ENCODE measurements at regions of chrX and their contacts with region 1.

Region 1: DNA sequence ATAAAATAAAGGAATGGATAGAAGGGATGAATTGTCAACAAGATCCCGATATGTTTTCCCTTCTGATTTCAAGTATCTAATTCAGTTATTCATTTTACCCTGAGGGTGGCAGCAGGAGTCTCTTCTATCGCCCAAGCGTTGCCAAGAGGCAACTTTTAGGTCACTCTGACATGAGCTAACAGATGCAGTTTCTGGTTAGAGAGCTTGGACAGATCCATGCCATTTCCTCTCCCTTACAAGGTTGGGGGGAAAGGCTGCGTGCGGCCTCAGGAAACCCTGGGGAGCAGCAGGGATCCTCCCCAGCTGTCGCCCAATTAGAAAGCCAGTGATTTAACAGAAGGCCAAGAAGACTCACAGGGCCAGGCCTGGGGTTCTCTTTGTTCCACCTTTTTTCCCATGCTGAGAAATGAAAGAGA is 35.3 kb upstream of the WAS start:
- DNase-seq: no peak
- ATAC-seq: peak; percentile 77
- H3K4me3 ChIP-seq: no peak overlapping the region
- H3K27ac ChIP-seq: no peak overlapping the region
- H3K4me1 ChIP-seq: no peaks in the 10 kb centered on the region
- H3K27me3 ChIP-seq: no peaks in the 10 kb centered on the region
- CTCF ChIP-seq: peak in 2 of 3 experiments; percentile 30 to 51; a peak in 3 of 6 replicates
- EP300 ChIP-seq: no peak
- POLR2A ChIP-seq: no peak
- RAD21 ChIP-seq: peak; percentile 74

Region 2: GRCh38 chrX:48715072-48715471 is 66.7 kb after region 1 on chrX:
- CTCF ChIA-PET with region 1: no interaction called
- POLR2A ChIA-PET with region 1: no interaction called
- RAD21 ChIA-PET with region 1: no interaction called
- SMC1A ChIA-PET with region 1: no interaction called
- in situ Hi-C with region 1: no loop called
- intact Hi-C with region 1: no loop called
- DNase-seq: no peak
- ATAC-seq: no peak
- H3K4me3 ChIP-seq: no peak overlapping the region
- H3K27ac ChIP-seq: no peak overlapping the region
- H3K4me1 ChIP-seq: no peaks in the 10 kb centered on the region
- H3K27me3 ChIP-seq: no peaks in the 10 kb centered on the region
- CTCF ChIP-seq: no peak
- EP300 ChIP-seq: no peak
- POLR2A ChIP-seq: no peak
- RAD21 ChIP-seq: no peak

Region 3: DNA sequence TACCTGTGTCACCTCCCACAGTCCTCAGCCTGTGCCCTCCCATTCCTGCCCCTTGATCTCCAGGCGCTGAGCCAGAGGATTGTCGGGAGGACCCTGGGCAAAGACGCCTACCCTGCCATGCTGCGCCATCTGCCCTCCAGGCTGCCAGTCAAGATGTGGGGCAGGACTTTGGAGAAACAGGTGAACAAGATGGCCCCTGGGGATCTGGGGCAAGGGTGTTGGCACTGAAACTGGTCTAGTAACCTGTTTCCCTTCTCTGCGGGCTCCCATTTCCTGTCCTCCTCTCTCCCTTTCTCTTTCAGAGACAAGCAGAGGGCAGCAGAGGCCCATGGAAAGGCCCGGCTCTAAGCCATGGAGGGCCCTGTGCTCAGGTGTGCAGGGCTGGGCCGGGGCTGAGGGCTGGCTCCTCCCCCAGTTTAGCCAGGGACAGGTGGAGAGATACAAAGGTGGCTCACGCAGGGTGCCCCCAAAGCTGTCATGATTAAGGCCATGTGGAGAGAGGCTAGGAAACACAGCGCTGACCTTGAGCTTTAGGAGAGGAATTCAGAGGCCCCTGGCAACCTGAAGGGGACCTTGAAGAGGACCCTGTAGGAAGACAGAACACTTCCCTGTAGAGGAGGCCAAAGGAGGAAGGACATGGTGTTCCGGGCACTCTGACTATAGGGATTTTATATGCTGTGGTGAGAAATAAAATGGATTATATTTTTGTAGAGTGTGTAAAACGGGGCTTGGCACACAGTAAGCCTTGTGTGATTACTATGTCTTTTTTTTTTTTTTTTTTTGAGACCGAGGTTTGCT is 113.5 kb after region 1 on chrX and contains the start of gene GLOD5:
- CTCF ChIA-PET with region 1: no interaction called
- POLR2A ChIA-PET with region 1: no interaction called
- RAD21 ChIA-PET with region 1: no interaction called
- SMC1A ChIA-PET with region 1: no interaction called
- in situ Hi-C with region 1: no loop called
- intact Hi-C with region 1: no loop called
- DNase-seq: no peak
- ATAC-seq: peak; percentile 75
- H3K4me3 ChIP-seq: no peak within 1 kb of the TSS
- H3K27ac ChIP-seq: no peak within 1 kb of the TSS
- H3K4me1 ChIP-seq: no peaks in the 10 kb centered on the region
- H3K27me3 ChIP-seq: no peaks in the 10 kb centered on the region
- CTCF ChIP-seq: peak in 1 of 3 experiments; percentile 26; a peak in 2 of 6 replicates
- EP300 ChIP-seq: no peak
- POLR2A ChIP-seq: no peak
- RAD21 ChIP-seq: peak; percentile 53
- polyA plus RNA-seq, gene GLOD5: not detected

Region 4: GRCh38 chrX:48891402-48892288 is 243.3 kb after region 1 on chrX:
- CTCF ChIA-PET with region 1: interaction called, 5 read pairs
- POLR2A ChIA-PET with region 1: no interaction called
- RAD21 ChIA-PET with region 1: interaction called, 3 read pairs
- SMC1A ChIA-PET with region 1: interaction called, 8 read pairs
- in situ Hi-C with region 1: no loop called
- intact Hi-C with region 1: loop called (anchors 5 kb)
- DNase-seq: no peak
- ATAC-seq: peak; percentile 95
- H3K4me3 ChIP-seq: peak overlapping the region; percentile 67; the same call in 1 of the 2 replicates
- H3K27ac ChIP-seq: no peak overlapping the region
- H3K4me1 ChIP-seq: no peaks in the 10 kb centered on the region
- H3K27me3 ChIP-seq: no peaks in the 10 kb centered on the region
- CTCF ChIP-seq: peak; percentile 41 to 70 (median 51); a peak in 5 of 6 replicates
- EP300 ChIP-seq: no peak
- POLR2A ChIP-seq: no peak
- RAD21 ChIP-seq: peak; percentile 43; the same call in 1 of the 2 replicates

Region 5: DNA sequence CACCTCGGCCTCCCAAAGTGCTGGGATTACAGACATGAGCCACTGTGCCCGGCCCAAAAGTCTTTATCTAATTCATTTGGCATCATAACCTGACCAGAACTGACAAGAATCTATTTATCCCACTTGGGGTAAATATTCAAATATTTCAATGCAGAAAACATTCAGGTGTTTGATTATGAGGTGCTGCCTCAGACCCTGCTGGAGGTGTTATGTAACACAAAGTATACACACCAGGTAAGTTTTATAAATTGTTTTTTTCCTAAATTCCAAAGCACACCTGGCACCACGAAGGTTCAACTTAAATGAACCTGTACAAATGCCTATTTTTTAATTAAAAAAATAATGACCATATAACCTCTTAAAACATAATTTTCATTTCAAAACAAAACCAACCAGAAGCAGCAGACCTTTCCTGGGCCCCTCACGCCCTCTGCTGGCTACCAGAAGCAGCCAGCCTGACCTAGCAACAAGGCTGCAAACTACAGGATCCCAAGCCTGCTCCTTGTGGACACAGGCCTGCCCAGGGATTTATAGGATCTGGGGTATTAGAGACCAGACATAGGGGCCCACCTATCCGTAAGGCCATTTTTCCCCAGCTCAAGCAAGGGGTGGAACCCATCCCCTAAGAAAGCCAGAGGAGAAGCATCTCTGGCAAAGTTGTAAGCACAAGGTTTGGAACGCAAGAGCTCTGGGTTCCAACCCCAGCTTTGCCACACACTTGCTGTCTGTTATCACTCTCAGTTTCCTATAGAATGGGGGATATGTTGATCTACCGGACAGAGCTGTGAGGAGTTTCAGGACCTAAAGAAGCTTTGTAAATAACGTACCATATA is 297.4 kb after region 1 on chrX:
- CTCF ChIA-PET with region 1: interaction called, 13 read pairs
- POLR2A ChIA-PET with region 1: no interaction called
- RAD21 ChIA-PET with region 1: interaction called, 5 read pairs
- SMC1A ChIA-PET with region 1: interaction called, 5 read pairs
- in situ Hi-C with region 1: no loop called
- intact Hi-C with region 1: loop called (anchors 10 kb)
- DNase-seq: no peak
- ATAC-seq: peak; percentile 82
- H3K4me3 ChIP-seq: no peak overlapping the region
- H3K27ac ChIP-seq: no peak overlapping the region
- H3K4me1 ChIP-seq: peaks cover 13% of the 10 kb centered on the region
- H3K27me3 ChIP-seq: no peaks in the 10 kb centered on the region
- CTCF ChIP-seq: peak; percentile 88 to 93 (median 91)
- EP300 ChIP-seq: no peak
- POLR2A ChIP-seq: no peak
- RAD21 ChIP-seq: peak; percentile 94

Measured in GM12878 (cell line).